Mammary epithelial cell (primary cell): ENCODE measurements at regions of chr6 and their contacts with region 1.

Region 1: GRCh38 chr6:146219101-146219500 is 190.2 kb downstream of the GRM1 start:
- DNase-seq: no peak
- H3K4me3 ChIP-seq: no peak overlapping the region
- H3K27ac ChIP-seq: no peak overlapping the region
- H3K4me1 ChIP-seq: no peaks in the 10 kb centered on the region
- H3K27me3 ChIP-seq: no peaks in the 10 kb centered on the region
- CTCF ChIP-seq: no peak

Region 2: GRCh38 chr6:146253691-146254090 is 34.6 kb after region 1 on chr6:
- CTCF ChIA-PET with region 1: no interaction called
- dilution Hi-C with region 1: loop called (anchors 5 kb)
- in situ Hi-C with region 1: no loop called
- intact Hi-C with region 1: no loop called
- DNase-seq: no peak
- H3K4me3 ChIP-seq: no peak overlapping the region
- H3K27ac ChIP-seq: no peak overlapping the region
- H3K4me1 ChIP-seq: peaks cover 4% of the 10 kb centered on the region
- H3K27me3 ChIP-seq: no peaks in the 10 kb centered on the region
- CTCF ChIP-seq: no peak